ENCODE measurements at regions of chr13 and their contacts with region 1.

Region 1: GRCh38 chr13:40910324-40911050 is 108.6 kb downstream of the ELF1 start:
- DNase-seq: no peak
- ATAC-seq: no peak
- H3K4me3 Mint-ChIP-seq: no peak overlapping the region
- H3K27ac Mint-ChIP-seq: no peak overlapping the region
- H3K4me1 Mint-ChIP-seq: no peaks in the 10 kb centered on the region
- H3K27me3 Mint-ChIP-seq: no peaks in the 10 kb centered on the region
- CTCF ChIP-seq: no peak

Region 2: DNA sequence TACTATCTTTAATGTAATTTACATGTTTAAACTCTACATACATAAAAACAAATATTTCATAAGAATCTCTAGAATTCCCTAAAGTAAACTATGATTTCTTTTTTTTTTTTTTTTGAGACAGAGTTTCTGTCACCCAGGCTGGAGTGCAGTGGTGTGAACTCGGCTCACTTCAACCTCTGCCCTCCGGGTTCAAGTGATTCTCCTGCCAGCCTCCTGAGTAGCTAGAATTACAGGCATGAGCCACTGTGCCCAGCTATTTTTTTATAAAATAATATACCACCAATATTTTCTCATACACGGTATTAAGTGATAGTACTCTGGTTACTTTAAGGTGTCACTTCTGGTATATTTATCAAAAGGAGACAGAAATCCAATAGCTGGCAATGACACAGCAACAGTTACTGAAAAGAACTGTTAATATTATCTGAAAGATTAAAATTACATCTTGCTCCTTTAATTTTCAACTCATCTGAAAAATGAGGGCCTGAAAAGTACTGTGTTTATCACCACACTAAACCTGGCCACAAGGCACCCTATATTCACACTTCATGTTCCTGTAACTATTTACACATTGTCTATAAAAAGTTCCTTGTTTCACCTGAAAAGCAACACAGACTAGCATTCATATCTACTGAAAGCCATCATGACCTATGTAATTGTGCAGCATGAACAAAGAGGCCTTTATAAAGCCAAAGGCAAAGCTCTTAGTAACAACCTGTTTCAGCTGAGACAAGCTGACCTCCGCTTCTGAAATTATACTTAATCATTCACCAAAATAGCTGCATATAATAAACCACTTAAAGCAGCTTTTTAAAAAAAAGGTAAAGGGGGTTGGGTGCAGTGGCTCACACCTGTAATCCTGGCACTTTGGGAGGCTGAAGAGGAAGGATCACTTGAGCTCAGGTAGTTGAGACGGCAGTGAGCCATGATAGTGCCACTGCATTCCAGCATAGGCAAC is 15.0 kb before region 1 on chr13:
- CTCF ChIA-PET with region 1: no interaction called
- POLR2A ChIA-PET with region 1: no interaction called
- intact Hi-C with region 1: loop called (anchors 1 kb)
- DNase-seq: no peak
- ATAC-seq: no peak
- H3K4me3 Mint-ChIP-seq: no peak overlapping the region
- H3K27ac Mint-ChIP-seq: peak overlapping the region; percentile 56
- H3K4me1 Mint-ChIP-seq: peaks cover 14% of the 10 kb centered on the region
- H3K27me3 Mint-ChIP-seq: no peaks in the 10 kb centered on the region
- CTCF ChIP-seq: no peak